ENCODE measurements at regions of chr22 and their contacts with region 1.

Region 1: GRCh38 chr22:39266398-39267030 is 21.7 kb upstream of the PDGFB start:
- DNase-seq: peak; percentile 22
- H3K4me3 Mint-ChIP-seq: no peak overlapping the region
- H3K27ac Mint-ChIP-seq: peak overlapping the region; percentile 92
- H3K4me1 Mint-ChIP-seq: peaks cover 30% of the 10 kb centered on the region
- H3K27me3 Mint-ChIP-seq: no peaks in the 10 kb centered on the region

Region 2: DNA sequence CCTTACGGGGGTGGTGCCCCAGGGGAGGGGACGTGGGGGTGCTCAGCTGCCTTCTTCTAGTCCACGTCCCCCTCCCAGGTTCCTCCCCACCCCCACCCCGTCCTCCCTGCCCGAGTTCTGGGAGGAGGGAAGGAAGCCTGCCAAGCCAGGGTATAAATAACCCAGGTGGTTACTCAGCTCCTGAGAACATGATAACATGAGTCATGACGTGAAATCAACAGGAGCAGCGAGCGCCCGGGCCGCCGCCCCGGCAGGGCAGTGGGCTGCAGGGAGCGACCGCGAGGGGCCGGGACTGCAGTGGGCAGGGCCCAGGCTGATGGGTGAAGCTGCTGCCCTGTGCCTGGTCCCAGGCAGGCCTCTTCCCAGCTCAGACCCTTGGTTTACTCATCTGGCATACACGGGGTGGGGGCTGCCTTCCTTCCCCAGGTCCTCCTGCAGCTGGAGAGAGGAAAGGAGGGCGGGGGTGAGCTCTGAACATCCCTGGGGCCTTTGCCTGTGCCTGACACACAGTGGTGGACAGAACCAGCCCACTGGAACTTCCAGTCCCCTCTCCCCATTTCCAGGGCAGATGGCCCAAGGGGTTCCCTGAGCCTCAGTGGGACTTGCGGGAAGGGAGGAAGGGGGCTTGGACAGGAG is 13.0 kb before region 1 on chr22:
- intact Hi-C with region 1: loop called (anchors 1 kb)
- DNase-seq: no peak
- H3K4me3 Mint-ChIP-seq: no peak overlapping the region
- H3K27ac Mint-ChIP-seq: no peak overlapping the region
- H3K4me1 Mint-ChIP-seq: peaks cover 23% of the 10 kb centered on the region
- H3K27me3 Mint-ChIP-seq: peaks cover 12% of the 10 kb centered on the region

Region 3: DNA sequence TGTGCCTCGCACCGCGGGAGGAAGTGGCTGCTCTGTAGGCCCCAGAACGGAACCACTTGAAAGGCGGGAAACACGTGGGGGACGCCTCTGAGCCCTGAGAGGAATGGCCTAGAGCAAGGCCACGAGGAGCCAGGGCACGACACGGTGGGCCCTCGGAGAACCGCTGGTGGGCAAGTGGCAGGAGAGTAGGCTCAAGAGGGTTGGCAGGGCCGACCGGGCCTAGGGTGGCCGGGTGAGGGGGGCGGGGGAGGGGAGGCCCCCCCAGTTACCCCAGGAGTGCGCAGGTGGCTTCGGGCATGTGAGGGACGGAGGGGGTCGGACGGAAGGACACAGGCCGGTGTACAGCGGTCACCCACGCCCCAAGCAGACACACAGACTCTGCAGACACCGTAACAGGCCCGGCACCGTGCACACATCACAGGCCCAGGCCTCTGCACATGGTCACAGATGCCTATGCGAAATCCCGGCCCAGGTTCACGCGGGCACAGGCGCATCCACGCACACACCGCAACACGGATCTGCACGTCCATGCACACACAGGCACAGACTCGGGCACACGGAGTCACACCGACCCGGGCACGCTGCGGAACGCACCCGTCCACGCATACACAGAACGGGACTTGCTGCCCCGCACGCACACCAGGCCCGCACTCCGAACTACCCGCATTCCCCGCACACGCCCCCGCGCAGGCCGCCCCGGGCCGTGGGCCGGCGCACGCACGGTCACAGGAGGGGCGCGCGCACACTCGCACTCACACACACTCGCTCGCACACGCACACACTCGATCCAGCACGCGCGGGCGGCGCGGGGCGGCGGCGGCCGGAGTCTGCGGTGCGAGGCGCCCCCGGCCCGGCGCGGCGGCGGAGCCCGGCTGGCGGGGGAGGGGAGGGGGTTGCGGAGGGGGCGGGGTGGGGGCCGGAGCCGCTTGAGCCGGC is 190.0 kb after region 1 on chr22 and contains the start of gene MGAT3:
- intact Hi-C with region 1: no loop called
- DNase-seq: no peak
- H3K4me3 Mint-ChIP-seq: peak within 1 kb of the TSS; percentile 23
- H3K27ac Mint-ChIP-seq: no peak within 1 kb of the TSS
- H3K4me1 Mint-ChIP-seq: peaks cover 1% of the 10 kb centered on the region
- H3K27me3 Mint-ChIP-seq: peaks cover 47% of the 10 kb centered on the region
- total RNA-seq, gene MGAT3: 0.11 and 0.21 TPM in 2 replicates